ENCODE measurements at regions of chr16 and their contacts with region 1.

Region 1: DNA sequence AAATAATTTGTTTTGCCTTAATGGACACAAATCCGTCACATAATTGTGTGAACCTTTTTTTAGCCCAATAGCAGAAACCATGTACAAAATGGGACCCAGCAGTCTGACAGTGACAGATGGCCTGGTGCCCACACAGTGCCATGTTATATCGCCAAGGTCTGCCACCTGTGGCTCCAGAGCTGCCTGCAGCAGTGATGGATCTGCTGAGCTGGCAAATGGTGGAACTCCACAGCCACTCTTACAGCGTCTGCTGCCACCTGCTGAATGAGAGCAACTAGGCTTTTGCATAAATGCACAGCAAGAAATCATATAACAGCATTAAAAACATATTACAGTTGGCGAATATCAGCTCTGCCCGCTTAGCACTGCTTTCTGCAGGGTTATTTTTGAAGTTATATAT is 59.4 kb downstream of the NUP93 start:
- DNase-seq: peak; percentile 52 to 62
- H3K4me3 ChIP-seq: no peak overlapping the region
- H3K4me3 Mint-ChIP-seq: no peak overlapping the region
- H3K27ac Mint-ChIP-seq: no peak overlapping the region
- H3K4me1 ChIP-seq: peaks cover 13% of the 10 kb centered on the region
- H3K4me1 Mint-ChIP-seq: peaks cover 30% of the 10 kb centered on the region
- H3K27me3 ChIP-seq: no peaks in the 10 kb centered on the region
- H3K27me3 Mint-ChIP-seq: no peaks in the 10 kb centered on the region
- CTCF ChIP-seq: peak; percentile 44 to 60

Region 2: GRCh38 chr16:56673921-56674320 is 115.4 kb before region 1 on chr16:
- CTCF ChIA-PET with region 1: interaction called, 3 read pairs
- POLR2A ChIA-PET with region 1: no interaction called
- intact Hi-C with region 1: loop called (anchors 1 kb)
- DNase-seq: peak in 1 of 2 experiments; percentile 70
- H3K4me3 ChIP-seq: no peak overlapping the region
- H3K4me3 Mint-ChIP-seq: no peak overlapping the region
- H3K27ac Mint-ChIP-seq: no peak overlapping the region
- H3K4me1 ChIP-seq: peaks cover 7% of the 10 kb centered on the region
- H3K4me1 Mint-ChIP-seq: no peaks in the 10 kb centered on the region
- H3K27me3 ChIP-seq: peaks cover 3% of the 10 kb centered on the region
- H3K27me3 Mint-ChIP-seq: peaks cover 32% of the 10 kb centered on the region
- CTCF ChIP-seq: peak; percentile 70 to 82

Region 3: GRCh38 chr16:56851671-56852400 is 62.5 kb after region 1 on chr16:
- CTCF ChIA-PET with region 1: interaction called, 17 read pairs
- POLR2A ChIA-PET with region 1: no interaction called
- intact Hi-C with region 1: loop called (anchors 1 kb)
- DNase-seq: no peak
- H3K4me3 ChIP-seq: no peak overlapping the region
- H3K4me3 Mint-ChIP-seq: no peak overlapping the region
- H3K27ac Mint-ChIP-seq: peak overlapping the region; percentile 77
- H3K4me1 ChIP-seq: peaks cover 63% of the 10 kb centered on the region
- H3K4me1 Mint-ChIP-seq: peaks cover 54% of the 10 kb centered on the region
- H3K27me3 ChIP-seq: no peaks in the 10 kb centered on the region
- H3K27me3 Mint-ChIP-seq: no peaks in the 10 kb centered on the region
- CTCF ChIP-seq: peak; percentile 74 to 86

Region 4: GRCh38 chr16:56866943-56867830 is 77.8 kb after region 1 on chr16:
- CTCF ChIA-PET with region 1: interaction called, 15 read pairs
- POLR2A ChIA-PET with region 1: no interaction called
- intact Hi-C with region 1: loop called (anchors 1 kb)
- DNase-seq: peak in 1 of 2 experiments; percentile 68
- H3K4me3 ChIP-seq: no peak overlapping the region
- H3K4me3 Mint-ChIP-seq: no peak overlapping the region
- H3K27ac Mint-ChIP-seq: peak overlapping the region; percentile 60
- H3K4me1 ChIP-seq: peaks cover 38% of the 10 kb centered on the region
- H3K4me1 Mint-ChIP-seq: peaks cover 35% of the 10 kb centered on the region
- H3K27me3 ChIP-seq: no peaks in the 10 kb centered on the region
- H3K27me3 Mint-ChIP-seq: no peaks in the 10 kb centered on the region
- CTCF ChIP-seq: peak; percentile 76 to 83

Measured in Caco-2 (cell line).